ENCODE measurements at regions of chr9 and their contacts with region 1.

Region 1: DNA sequence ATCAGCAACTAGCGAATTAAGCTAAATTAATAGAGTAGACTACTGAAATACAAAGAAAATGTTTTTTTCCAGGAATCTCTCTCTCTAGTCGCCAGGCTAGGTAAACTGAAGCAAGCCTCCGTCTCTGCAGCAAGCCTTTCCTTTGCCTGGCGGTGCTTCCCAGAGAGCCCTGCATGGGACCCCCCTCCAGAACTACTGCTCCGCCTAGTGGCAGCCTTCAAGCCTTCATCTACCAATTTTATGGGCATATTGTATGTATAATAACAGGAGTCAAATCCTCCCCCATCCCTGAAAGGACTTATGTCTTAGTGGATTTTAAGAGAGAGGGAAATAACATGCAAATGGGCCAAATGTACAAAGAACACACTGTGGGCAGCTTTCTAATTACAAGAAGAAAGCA is 241.9 kb downstream of the SAXO1 start:
- DNase-seq: peak; percentile 57
- H3K4me3 ChIP-seq: no peak overlapping the region; a peak in 1 of 4 replicates
- H3K27ac ChIP-seq: no peak overlapping the region
- H3K4me1 ChIP-seq: peaks cover under 1 to 20% of the 10 kb centered on the region in 2 experiments; a peak in 3 of 4 replicates
- H3K27me3 ChIP-seq: no peaks in the 10 kb centered on the region
- CTCF ChIP-seq: peak; percentile 48
- EP300 ChIP-seq: no peak
- RAD21 ChIP-seq: peak; percentile 75

Region 2: GRCh38 chr9:18776836-18777820 is 13.9 kb before region 1 on chr9:
- CTCF ChIA-PET with region 1: interaction called, 10 read pairs
- POLR2A ChIA-PET with region 1: no interaction called
- DNase-seq: peak; percentile 8
- H3K4me3 ChIP-seq: no peak overlapping the region
- H3K27ac ChIP-seq: no peak overlapping the region
- H3K4me1 ChIP-seq: 0 out of 4 replicates have a peak, but pooled peaks cover 0 to 2% of the 10 kb centered on the region in 2 experiments
- H3K27me3 ChIP-seq: no peaks in the 10 kb centered on the region
- CTCF ChIP-seq: no peak
- EP300 ChIP-seq: no peak
- RAD21 ChIP-seq: no peak